Caco-2 (cell line): ENCODE measurements at regions of chr3 and their contacts with region 1.

Region 1: DNA sequence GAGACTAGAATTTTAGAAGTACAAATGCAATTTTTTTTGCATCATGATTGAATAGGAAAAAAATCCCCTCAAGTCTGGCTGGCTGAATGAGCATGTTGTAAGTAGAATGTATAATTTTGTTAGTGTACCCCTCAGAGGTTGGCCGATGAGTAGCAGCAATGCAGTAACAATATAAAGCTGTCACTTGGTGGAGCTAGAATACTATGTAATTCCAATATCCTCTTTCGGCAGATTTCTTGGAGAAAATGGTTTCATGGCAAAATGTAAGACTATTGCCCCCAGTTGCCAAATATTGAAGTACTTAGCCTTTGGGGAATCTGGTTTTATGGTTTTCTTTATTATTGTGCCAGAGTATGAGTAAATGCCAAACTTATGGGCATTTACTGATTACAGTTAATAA is 39.8 kb upstream of the SGO1 start:
- DNase-seq: peak in 1 of 2 experiments; percentile 44
- H3K4me3 ChIP-seq: no peak overlapping the region
- H3K4me3 Mint-ChIP-seq: no peak overlapping the region
- H3K27ac Mint-ChIP-seq: no peak overlapping the region
- H3K4me1 ChIP-seq: no peaks in the 10 kb centered on the region
- H3K4me1 Mint-ChIP-seq: no peaks in the 10 kb centered on the region
- H3K27me3 ChIP-seq: no peaks in the 10 kb centered on the region
- H3K27me3 Mint-ChIP-seq: no peaks in the 10 kb centered on the region
- CTCF ChIP-seq: peak; percentile 20 to 45

Region 2: DNA sequence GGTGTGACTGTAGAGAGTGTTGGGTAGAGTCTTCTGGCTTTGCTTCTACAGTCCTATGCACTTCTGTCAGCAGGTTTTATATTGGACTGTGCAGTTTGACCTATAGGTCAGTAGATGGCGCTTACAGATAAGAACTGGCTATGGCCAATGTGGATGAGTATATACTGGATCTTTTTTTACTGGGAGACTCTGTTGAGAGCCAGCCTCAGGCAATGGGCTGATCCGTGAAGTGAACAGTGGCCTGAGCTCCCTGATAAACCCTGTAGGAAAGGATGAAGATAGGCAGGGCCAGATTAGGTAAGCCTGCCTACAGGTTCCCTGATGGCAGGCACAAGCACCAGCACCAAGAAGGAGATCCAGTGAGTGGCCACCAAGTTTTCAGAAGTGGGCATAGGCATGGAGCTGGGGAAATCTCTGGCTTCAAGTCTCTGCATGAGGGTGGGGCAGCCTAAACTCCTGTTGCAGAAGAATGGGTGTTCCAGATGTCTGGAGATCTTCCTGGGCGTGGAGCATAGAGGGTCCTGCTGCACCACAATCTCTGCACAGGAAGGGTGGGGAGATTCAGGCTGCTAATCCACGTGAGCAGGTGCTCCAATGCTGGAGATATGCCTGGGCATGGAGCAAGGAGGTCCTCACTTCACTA is 286.2 kb after region 1 on chr3:
- CTCF ChIA-PET with region 1: no interaction called
- POLR2A ChIA-PET with region 1: no interaction called
- intact Hi-C with region 1: loop called (anchors 2 kb)
- DNase-seq: peak; percentile 22 to 38
- H3K4me3 ChIP-seq: no peak overlapping the region
- H3K4me3 Mint-ChIP-seq: no peak overlapping the region
- H3K27ac Mint-ChIP-seq: no peak overlapping the region
- H3K4me1 ChIP-seq: no peaks in the 10 kb centered on the region
- H3K4me1 Mint-ChIP-seq: no peaks in the 10 kb centered on the region
- H3K27me3 ChIP-seq: no peaks in the 10 kb centered on the region
- H3K27me3 Mint-ChIP-seq: peaks cover 3% of the 10 kb centered on the region
- CTCF ChIP-seq: peak; percentile 45 to 65

Region 3: GRCh38 chr3:20739814-20740213 is 514.0 kb after region 1 on chr3:
- CTCF ChIA-PET with region 1: no interaction called
- POLR2A ChIA-PET with region 1: no interaction called
- intact Hi-C with region 1: loop called (anchors 10 kb)
- DNase-seq: no peak
- H3K4me3 ChIP-seq: no peak overlapping the region
- H3K4me3 Mint-ChIP-seq: no peak overlapping the region
- H3K27ac Mint-ChIP-seq: no peak overlapping the region
- H3K4me1 ChIP-seq: no peaks in the 10 kb centered on the region
- H3K4me1 Mint-ChIP-seq: no peaks in the 10 kb centered on the region
- H3K27me3 ChIP-seq: no peaks in the 10 kb centered on the region
- H3K27me3 Mint-ChIP-seq: no peaks in the 10 kb centered on the region
- CTCF ChIP-seq: no peak

Region 4: GRCh38 chr3:21484057-21484827 is 1258.5 kb after region 1 on chr3:
- CTCF ChIA-PET with region 1: no interaction called
- POLR2A ChIA-PET with region 1: no interaction called
- intact Hi-C with region 1: loop called (anchors 2 kb)
- DNase-seq: peak; percentile 43 to 57
- H3K4me3 ChIP-seq: no peak overlapping the region
- H3K4me3 Mint-ChIP-seq: no peak overlapping the region
- H3K27ac Mint-ChIP-seq: no peak overlapping the region
- H3K4me1 ChIP-seq: no peaks in the 10 kb centered on the region
- H3K4me1 Mint-ChIP-seq: no peaks in the 10 kb centered on the region
- H3K27me3 ChIP-seq: no peaks in the 10 kb centered on the region
- H3K27me3 Mint-ChIP-seq: no peaks in the 10 kb centered on the region
- CTCF ChIP-seq: peak; percentile 48 to 64

Region 5: DNA sequence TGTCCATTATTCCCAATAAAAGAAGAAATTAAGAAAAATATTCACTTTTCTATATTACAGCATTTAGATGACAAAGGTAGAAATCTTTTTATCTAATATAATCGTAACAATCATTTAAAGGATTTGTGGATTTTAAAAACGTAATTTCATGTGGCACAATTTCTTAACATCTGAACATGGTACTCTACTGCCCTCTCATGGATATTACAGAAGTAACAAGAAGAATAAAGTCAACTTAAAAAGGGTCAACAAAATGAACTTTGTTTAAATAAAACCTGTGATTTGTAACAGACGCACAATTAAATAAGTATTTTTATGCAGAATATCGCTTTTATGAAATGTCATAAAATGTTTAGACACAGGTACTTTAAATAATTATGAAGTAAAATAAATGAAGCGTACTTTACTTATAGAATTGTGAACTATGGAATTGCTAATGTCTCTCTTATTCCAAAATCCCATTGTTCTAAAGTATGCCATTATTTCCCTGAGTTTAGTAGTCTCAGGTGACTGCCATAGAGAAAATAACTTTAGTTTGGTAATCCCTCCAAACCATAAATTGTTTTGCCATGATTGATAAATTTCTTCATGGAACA is 1892.1 kb after region 1 on chr3:
- CTCF ChIA-PET with region 1: no interaction called
- POLR2A ChIA-PET with region 1: no interaction called
- intact Hi-C with region 1: loop called (anchors 10 kb)
- DNase-seq: no peak
- H3K4me3 ChIP-seq: no peak overlapping the region
- H3K4me3 Mint-ChIP-seq: no peak overlapping the region
- H3K27ac Mint-ChIP-seq: no peak overlapping the region
- H3K4me1 ChIP-seq: no peaks in the 10 kb centered on the region
- H3K4me1 Mint-ChIP-seq: no peaks in the 10 kb centered on the region
- H3K27me3 ChIP-seq: no peaks in the 10 kb centered on the region
- H3K27me3 Mint-ChIP-seq: peaks cover 5% of the 10 kb centered on the region
- CTCF ChIP-seq: peak; percentile 27 to 43